ENCODE measurements at regions of chr13 and their contacts with region 1.

Region 1: GRCh38 chr13:24228852-24229458 is 68.4 kb downstream of the SPATA13 start:
- DNase-seq: peak; percentile 69
- ATAC-seq: peak; percentile 66
- H3K4me3 Mint-ChIP-seq: no peak overlapping the region
- H3K27ac Mint-ChIP-seq: no peak overlapping the region
- H3K4me1 Mint-ChIP-seq: peaks cover 38% of the 10 kb centered on the region
- H3K27me3 Mint-ChIP-seq: no peaks in the 10 kb centered on the region

Region 2: GRCh38 chr13:23921451-23921888 is 307.5 kb before region 1 on chr13:
- CTCF ChIA-PET with region 1: interaction called, 14 read pairs
- POLR2A ChIA-PET with region 1: no interaction called
- DNase-seq: peak; percentile 33
- ATAC-seq: peak; percentile 49
- H3K4me3 Mint-ChIP-seq: no peak overlapping the region
- H3K27ac Mint-ChIP-seq: no peak overlapping the region
- H3K4me1 Mint-ChIP-seq: no peaks in the 10 kb centered on the region
- H3K27me3 Mint-ChIP-seq: peaks cover 37% of the 10 kb centered on the region

Region 3: GRCh38 chr13:24020375-24020830 is 208.6 kb before region 1 on chr13:
- CTCF ChIA-PET with region 1: interaction called, 82 read pairs
- POLR2A ChIA-PET with region 1: interaction called, 3 read pairs
- DNase-seq: peak; percentile 62
- ATAC-seq: no peak
- H3K4me3 Mint-ChIP-seq: no peak overlapping the region
- H3K27ac Mint-ChIP-seq: no peak overlapping the region
- H3K4me1 Mint-ChIP-seq: peaks cover 10% of the 10 kb centered on the region
- H3K27me3 Mint-ChIP-seq: no peaks in the 10 kb centered on the region

Region 4: DNA sequence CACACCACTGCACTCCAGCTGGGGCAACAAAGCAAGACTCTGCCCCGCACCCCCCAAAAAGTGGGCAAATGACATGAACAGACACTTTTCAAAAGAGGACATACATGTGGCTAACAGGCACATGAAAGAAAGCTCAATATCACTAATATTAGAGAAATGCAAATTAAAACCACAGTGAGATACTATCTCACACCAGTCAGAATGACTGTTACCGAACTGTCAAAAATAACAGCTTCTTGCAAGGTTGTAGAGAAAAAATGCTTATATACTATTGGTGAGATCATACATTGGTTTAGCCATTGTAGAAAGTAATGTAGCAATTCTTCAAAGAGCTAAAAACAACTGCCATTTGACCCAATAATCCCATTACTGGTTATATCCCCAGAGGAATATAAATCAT is 168.0 kb before region 1 on chr13:
- CTCF ChIA-PET with region 1: interaction called, 52 read pairs
- POLR2A ChIA-PET with region 1: no interaction called
- DNase-seq: no peak
- ATAC-seq: no peak
- H3K4me3 Mint-ChIP-seq: no peak overlapping the region
- H3K27ac Mint-ChIP-seq: no peak overlapping the region
- H3K4me1 Mint-ChIP-seq: peaks cover 14% of the 10 kb centered on the region
- H3K27me3 Mint-ChIP-seq: peaks cover 4% of the 10 kb centered on the region

Region 5: GRCh38 chr13:24148399-24149305 is 80.3 kb before region 1 on chr13:
- CTCF ChIA-PET with region 1: no interaction called
- POLR2A ChIA-PET with region 1: no interaction called
- DNase-seq: no peak
- ATAC-seq: no peak
- H3K4me3 Mint-ChIP-seq: no peak overlapping the region
- H3K27ac Mint-ChIP-seq: no peak overlapping the region
- H3K4me1 Mint-ChIP-seq: no peaks in the 10 kb centered on the region
- H3K27me3 Mint-ChIP-seq: peaks cover 9% of the 10 kb centered on the region

Region 6: DNA sequence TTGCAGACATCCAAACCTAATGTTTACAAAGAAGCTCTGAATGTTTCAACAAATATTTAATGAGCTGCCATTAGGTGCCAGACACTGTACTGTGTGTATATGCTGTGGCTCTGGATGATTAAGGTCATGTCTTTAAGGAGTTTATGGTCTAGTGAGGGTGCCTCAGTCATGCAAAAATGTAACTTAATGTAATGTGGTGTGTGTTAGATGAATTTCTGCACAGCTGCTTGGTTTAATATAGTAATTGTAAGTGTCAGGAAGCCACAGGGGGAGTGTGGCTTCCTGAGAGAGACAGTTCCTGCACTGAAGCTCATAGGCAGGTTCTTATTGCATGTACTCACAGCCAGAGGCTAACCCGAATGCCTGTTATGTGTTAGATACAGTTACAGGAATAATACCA is 25.1 kb before region 1 on chr13:
- CTCF ChIA-PET with region 1: interaction called, 13 read pairs
- POLR2A ChIA-PET with region 1: no interaction called
- DNase-seq: peak; percentile 54
- ATAC-seq: peak; percentile 99
- H3K4me3 Mint-ChIP-seq: peak overlapping the region; percentile 56
- H3K27ac Mint-ChIP-seq: peak overlapping the region; percentile 80
- H3K4me1 Mint-ChIP-seq: peaks cover 42% of the 10 kb centered on the region
- H3K27me3 Mint-ChIP-seq: no peaks in the 10 kb centered on the region

Region 7: GRCh38 chr13:24254146-24254841 is 25.3 kb after region 1 on chr13:
- CTCF ChIA-PET with region 1: interaction called, 11 read pairs
- POLR2A ChIA-PET with region 1: interaction called, 4 read pairs
- DNase-seq: peak; percentile 81
- ATAC-seq: peak; percentile 65
- H3K4me3 Mint-ChIP-seq: peak overlapping the region; percentile 87
- H3K27ac Mint-ChIP-seq: peak overlapping the region; percentile 94
- H3K4me1 Mint-ChIP-seq: peaks cover 85% of the 10 kb centered on the region
- H3K27me3 Mint-ChIP-seq: no peaks in the 10 kb centered on the region

Region 8: GRCh38 chr13:24341439-24341838 is 112.5 kb after region 1 on chr13:
- CTCF ChIA-PET with region 1: no interaction called
- POLR2A ChIA-PET with region 1: no interaction called
- DNase-seq: no peak
- ATAC-seq: no peak
- H3K4me3 Mint-ChIP-seq: no peak overlapping the region
- H3K27ac Mint-ChIP-seq: no peak overlapping the region
- H3K4me1 Mint-ChIP-seq: no peaks in the 10 kb centered on the region
- H3K27me3 Mint-ChIP-seq: peaks cover 10% of the 10 kb centered on the region

Region 9: DNA sequence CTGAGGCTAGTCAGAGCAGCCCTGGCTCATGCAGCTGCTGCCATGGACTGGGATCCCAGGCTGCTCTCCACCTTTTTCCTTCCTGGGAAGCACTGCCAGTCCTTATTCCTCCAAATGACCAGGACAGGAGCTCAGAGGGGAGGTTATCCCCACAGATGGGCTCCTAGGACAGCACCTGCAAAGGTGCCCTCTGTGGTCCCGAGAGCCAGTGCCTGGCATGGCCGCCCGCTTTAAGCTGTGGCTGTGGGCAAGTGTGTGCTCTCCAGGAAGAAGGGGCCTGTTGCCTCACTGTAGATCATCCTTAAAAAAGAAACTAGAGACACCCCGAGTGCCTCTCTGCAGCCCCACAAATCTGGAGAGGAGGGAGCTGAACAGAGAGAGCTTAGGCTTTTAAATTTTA is 164.0 kb after region 1 on chr13:
- CTCF ChIA-PET with region 1: no interaction called
- POLR2A ChIA-PET with region 1: no interaction called
- DNase-seq: no peak
- ATAC-seq: no peak
- H3K4me3 Mint-ChIP-seq: no peak overlapping the region
- H3K27ac Mint-ChIP-seq: no peak overlapping the region
- H3K4me1 Mint-ChIP-seq: no peaks in the 10 kb centered on the region
- H3K27me3 Mint-ChIP-seq: no peaks in the 10 kb centered on the region

Measured in activated CD8-positive, alpha-beta T cell treated with anti-CD3 and anti-CD28 coated beads, Interleukin-2, amount 10 ng/mL, durations not matched to agents 7 days and 5 days (primary cell).